GM12878 (cell line): ENCODE measurements at regions of chr9 and their contacts with region 1.

Region 1: GRCh38 chr9:4339357-4339756 is 39.5 kb upstream of the GLIS3 start:
- DNase-seq: peak; percentile 52
- ATAC-seq: peak; percentile 94
- H3K4me3 ChIP-seq: no peak overlapping the region
- H3K27ac ChIP-seq: no peak overlapping the region
- H3K4me1 ChIP-seq: no peaks in the 10 kb centered on the region
- H3K27me3 ChIP-seq: no peaks in the 10 kb centered on the region; a peak in 1 of 4 replicates
- CTCF ChIP-seq: peak; percentile 90 to 99 (median 94)
- EP300 ChIP-seq: no peak
- POLR2A ChIP-seq: no peak
- RAD21 ChIP-seq: peak; percentile 90

Region 2: DNA sequence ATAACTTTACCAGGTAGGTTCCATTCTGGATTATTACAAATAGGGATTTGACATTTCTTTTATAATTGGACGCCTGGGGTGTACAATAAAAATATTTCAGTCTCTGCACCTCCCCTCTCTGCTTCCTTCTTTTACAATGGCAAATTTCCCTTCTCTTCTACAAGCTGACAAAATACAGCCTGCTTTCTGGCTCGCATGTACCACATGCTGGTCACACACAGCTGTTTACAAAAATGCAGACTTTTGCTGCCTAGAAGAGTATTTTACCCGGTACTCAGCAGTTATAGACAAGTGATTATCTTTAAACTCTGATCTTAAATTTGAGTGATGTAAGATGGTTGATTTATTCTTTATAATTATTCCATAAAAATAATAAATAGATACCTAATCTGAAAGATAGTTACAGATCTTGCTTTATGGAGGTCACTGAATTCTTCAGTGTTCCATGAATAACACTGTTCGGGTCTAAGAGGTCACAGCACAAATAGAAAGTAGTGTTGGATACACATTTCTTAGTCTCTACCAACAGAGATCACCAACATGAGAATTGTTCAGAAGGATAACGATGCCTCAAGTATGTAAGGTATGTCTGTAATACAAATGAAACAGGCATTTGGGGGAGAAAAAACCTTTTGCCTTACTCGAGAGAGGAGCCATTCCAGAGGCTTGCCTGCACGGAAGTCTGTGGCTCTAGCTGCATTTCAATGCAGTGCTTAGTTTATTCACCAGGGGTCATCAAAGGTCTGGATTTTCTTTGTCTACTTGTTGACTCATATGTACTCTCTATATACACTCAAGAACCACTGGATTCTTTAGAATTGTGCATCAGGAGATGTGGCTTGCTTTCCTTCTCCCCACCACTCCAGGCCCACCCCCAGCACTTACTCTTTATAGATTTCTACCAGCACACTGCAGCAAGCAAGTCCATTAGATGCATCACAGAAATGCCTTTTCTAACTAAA is 607.0 kb before region 1 on chr9:
- CTCF ChIA-PET with region 1: interaction called, 7 read pairs
- POLR2A ChIA-PET with region 1: no interaction called
- RAD21 ChIA-PET with region 1: interaction called, 8 read pairs
- SMC1A ChIA-PET with region 1: interaction called, 8 read pairs
- in situ Hi-C with region 1: loop called (anchors 10 kb)
- intact Hi-C with region 1: no loop called
- DNase-seq: peak; percentile 64
- ATAC-seq: peak; percentile 88
- H3K4me3 ChIP-seq: no peak overlapping the region
- H3K27ac ChIP-seq: no peak overlapping the region
- H3K4me1 ChIP-seq: peaks cover 22% of the 10 kb centered on the region
- H3K27me3 ChIP-seq: no peaks in the 10 kb centered on the region
- CTCF ChIP-seq: peak; percentile 60 to 83 (median 65)
- EP300 ChIP-seq: no peak
- POLR2A ChIP-seq: no peak
- RAD21 ChIP-seq: peak; percentile 83

Region 3: DNA sequence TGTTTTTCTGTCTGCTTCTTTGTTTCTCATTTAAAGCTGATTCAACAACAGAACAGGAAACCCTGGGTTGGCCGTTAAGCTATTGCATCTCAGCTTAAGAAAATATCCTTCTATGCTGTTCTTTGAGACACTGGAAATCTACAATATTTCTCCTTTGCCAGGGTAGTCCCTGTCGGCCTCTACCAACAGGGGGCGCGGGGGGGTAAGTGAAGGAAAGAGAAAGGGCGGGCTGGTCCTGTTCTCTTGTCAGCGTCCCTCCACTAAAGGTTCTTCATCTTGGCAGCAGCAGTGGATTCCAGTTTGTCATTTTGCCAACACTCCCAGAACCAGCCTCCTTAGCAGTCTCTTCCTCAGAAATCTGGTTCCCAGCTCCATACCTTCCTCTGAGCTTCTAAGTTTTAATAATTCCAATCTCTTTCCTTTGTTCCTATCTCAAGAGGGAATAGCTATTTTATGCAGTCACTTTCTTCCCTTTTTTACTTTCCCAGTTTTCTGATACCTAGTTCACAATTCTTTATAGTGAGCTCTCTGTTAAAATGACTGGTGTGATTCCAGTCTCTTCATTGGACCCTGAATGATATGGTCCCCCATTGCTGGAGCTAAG is 261.8 kb before region 1 on chr9:
- CTCF ChIA-PET with region 1: interaction called, 15 read pairs
- POLR2A ChIA-PET with region 1: no interaction called
- RAD21 ChIA-PET with region 1: no interaction called
- SMC1A ChIA-PET with region 1: interaction called, 3 read pairs
- in situ Hi-C with region 1: no loop called
- intact Hi-C with region 1: loop called (anchors 2 kb)
- DNase-seq: no peak
- ATAC-seq: peak; percentile 88
- H3K4me3 ChIP-seq: no peak overlapping the region
- H3K27ac ChIP-seq: no peak overlapping the region
- H3K4me1 ChIP-seq: no peaks in the 10 kb centered on the region
- H3K27me3 ChIP-seq: no peaks in the 10 kb centered on the region
- CTCF ChIP-seq: peak; percentile 54 to 78 (median 72)
- EP300 ChIP-seq: no peak
- POLR2A ChIP-seq: no peak
- RAD21 ChIP-seq: peak; percentile 63

Region 4: GRCh38 chr9:4289411-4290380 is 49.7 kb before region 1 on chr9:
- CTCF ChIA-PET with region 1: no interaction called
- POLR2A ChIA-PET with region 1: no interaction called
- RAD21 ChIA-PET with region 1: no interaction called
- SMC1A ChIA-PET with region 1: no interaction called
- in situ Hi-C with region 1: no loop called
- intact Hi-C with region 1: no loop called
- DNase-seq: no peak
- ATAC-seq: peak; percentile 57
- H3K4me3 ChIP-seq: no peak overlapping the region
- H3K27ac ChIP-seq: no peak overlapping the region
- H3K4me1 ChIP-seq: no peaks in the 10 kb centered on the region
- H3K27me3 ChIP-seq: peaks cover 0 to 3% of the 10 kb centered on the region in 2 experiments; a peak in 2 of 4 replicates
- CTCF ChIP-seq: no peak
- EP300 ChIP-seq: no peak
- POLR2A ChIP-seq: no peak
- RAD21 ChIP-seq: no peak

Region 5: DNA sequence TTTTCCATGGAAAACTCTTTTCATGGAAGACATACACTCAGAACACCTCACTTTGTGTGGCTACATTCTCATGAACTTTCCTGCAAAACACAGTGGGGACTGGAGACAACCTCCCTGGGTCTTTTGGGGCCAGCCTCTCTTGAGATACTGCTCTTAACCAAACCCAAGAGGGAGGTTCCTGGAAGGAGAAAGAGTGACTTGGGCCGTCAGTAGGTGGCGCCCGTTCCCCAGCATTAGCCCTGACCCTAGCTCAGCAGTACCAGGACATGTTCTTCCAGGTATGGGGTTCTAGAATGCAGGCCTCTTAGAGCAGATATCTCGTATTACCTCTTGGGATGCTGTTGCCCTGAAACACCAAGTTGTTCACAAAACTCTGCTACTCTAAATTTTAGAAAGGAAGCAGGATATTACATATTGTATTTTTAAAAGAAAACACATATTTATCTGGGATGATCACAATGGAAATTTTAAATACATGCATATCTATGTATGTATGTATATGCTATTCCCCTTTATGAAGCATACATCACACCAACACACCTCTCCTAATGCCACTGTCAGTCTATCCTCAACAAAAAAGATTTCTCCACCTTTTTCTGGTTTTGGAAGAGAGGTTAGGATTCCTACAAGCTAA is 23.7 kb before region 1 on chr9:
- CTCF ChIA-PET with region 1: interaction called, 102 read pairs
- POLR2A ChIA-PET with region 1: no interaction called
- RAD21 ChIA-PET with region 1: interaction called, 14 read pairs
- SMC1A ChIA-PET with region 1: interaction called, 22 read pairs
- in situ Hi-C with region 1: no loop called
- intact Hi-C with region 1: no loop called
- DNase-seq: peak; percentile 32
- ATAC-seq: peak; percentile 100
- H3K4me3 ChIP-seq: no peak overlapping the region
- H3K27ac ChIP-seq: no peak overlapping the region
- H3K4me1 ChIP-seq: no peaks in the 10 kb centered on the region
- H3K27me3 ChIP-seq: no peaks in the 10 kb centered on the region; a peak in 1 of 4 replicates
- CTCF ChIP-seq: peak; percentile 81 to 92 (median 91)
- EP300 ChIP-seq: no peak
- POLR2A ChIP-seq: no peak
- RAD21 ChIP-seq: peak; percentile 91

Region 6: GRCh38 chr9:4327504-4328191 is 11.7 kb before region 1 on chr9:
- CTCF ChIA-PET with region 1: interaction called, 20 read pairs
- POLR2A ChIA-PET with region 1: no interaction called
- RAD21 ChIA-PET with region 1: no interaction called
- SMC1A ChIA-PET with region 1: interaction called, 10 read pairs
- in situ Hi-C with region 1: no loop called
- intact Hi-C with region 1: no loop called
- DNase-seq: no peak
- ATAC-seq: no peak
- H3K4me3 ChIP-seq: no peak overlapping the region
- H3K27ac ChIP-seq: no peak overlapping the region
- H3K4me1 ChIP-seq: no peaks in the 10 kb centered on the region
- H3K27me3 ChIP-seq: no peaks in the 10 kb centered on the region
- CTCF ChIP-seq: peak in 1 of 3 experiments; percentile 15; a peak in 1 of 6 replicates
- EP300 ChIP-seq: no peak
- POLR2A ChIP-seq: no peak
- RAD21 ChIP-seq: no peak

Region 7: DNA sequence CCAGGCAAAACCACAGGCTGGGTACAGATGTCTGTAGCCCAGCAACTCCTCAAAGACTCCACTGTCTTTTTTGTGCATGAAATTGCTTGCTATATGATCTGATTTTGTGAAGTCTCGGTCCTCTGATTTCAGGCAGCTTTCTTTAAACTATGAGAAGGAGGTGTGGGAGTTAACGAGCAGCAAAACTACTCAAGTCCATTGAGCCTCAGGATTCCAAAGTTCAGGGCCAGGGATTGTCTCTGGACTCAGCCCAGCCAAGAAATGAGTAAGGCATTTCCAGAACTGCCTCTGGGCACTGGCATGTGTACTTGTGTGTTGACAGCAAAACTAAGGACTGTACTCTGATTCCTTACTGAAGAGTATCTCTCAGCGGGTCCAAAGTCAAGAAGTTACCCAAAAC is 13.9 kb after region 1 on chr9:
- CTCF ChIA-PET with region 1: interaction called, 16 read pairs
- POLR2A ChIA-PET with region 1: no interaction called
- RAD21 ChIA-PET with region 1: no interaction called
- SMC1A ChIA-PET with region 1: interaction called, 3 read pairs
- in situ Hi-C with region 1: no loop called
- intact Hi-C with region 1: no loop called
- DNase-seq: no peak
- ATAC-seq: no peak
- H3K4me3 ChIP-seq: no peak overlapping the region
- H3K27ac ChIP-seq: no peak overlapping the region
- H3K4me1 ChIP-seq: no peaks in the 10 kb centered on the region
- H3K27me3 ChIP-seq: 0 out of 4 replicates have a peak, but pooled peaks cover 0 to 1% of the 10 kb centered on the region in 2 experiments
- CTCF ChIP-seq: no peak
- EP300 ChIP-seq: no peak
- POLR2A ChIP-seq: no peak
- RAD21 ChIP-seq: no peak

Region 8: GRCh38 chr9:4366591-4367330 is 27.4 kb after region 1 on chr9:
- CTCF ChIA-PET with region 1: interaction called, 23 read pairs
- POLR2A ChIA-PET with region 1: no interaction called
- RAD21 ChIA-PET with region 1: interaction called, 5 read pairs
- SMC1A ChIA-PET with region 1: no interaction called
- in situ Hi-C with region 1: no loop called
- intact Hi-C with region 1: no loop called
- DNase-seq: no peak
- ATAC-seq: peak; percentile 64
- H3K4me3 ChIP-seq: no peak overlapping the region
- H3K27ac ChIP-seq: no peak overlapping the region
- H3K4me1 ChIP-seq: no peaks in the 10 kb centered on the region
- H3K27me3 ChIP-seq: no peaks in the 10 kb centered on the region
- CTCF ChIP-seq: peak; percentile 73 to 74 (median 73)
- EP300 ChIP-seq: no peak
- POLR2A ChIP-seq: no peak
- RAD21 ChIP-seq: peak; percentile 71

Region 9: GRCh38 chr9:4381744-4382143 is 42.4 kb after region 1 on chr9:
- CTCF ChIA-PET with region 1: no interaction called
- POLR2A ChIA-PET with region 1: no interaction called
- RAD21 ChIA-PET with region 1: no interaction called
- SMC1A ChIA-PET with region 1: no interaction called
- in situ Hi-C with region 1: no loop called
- intact Hi-C with region 1: no loop called
- DNase-seq: no peak
- ATAC-seq: no peak
- H3K4me3 ChIP-seq: no peak overlapping the region
- H3K27ac ChIP-seq: no peak overlapping the region
- H3K4me1 ChIP-seq: peaks cover 5% of the 10 kb centered on the region; the same call in 1 of the 2 replicates
- H3K27me3 ChIP-seq: no peaks in the 10 kb centered on the region
- CTCF ChIP-seq: no peak
- EP300 ChIP-seq: no peak
- POLR2A ChIP-seq: no peak
- RAD21 ChIP-seq: no peak

Region 10: DNA sequence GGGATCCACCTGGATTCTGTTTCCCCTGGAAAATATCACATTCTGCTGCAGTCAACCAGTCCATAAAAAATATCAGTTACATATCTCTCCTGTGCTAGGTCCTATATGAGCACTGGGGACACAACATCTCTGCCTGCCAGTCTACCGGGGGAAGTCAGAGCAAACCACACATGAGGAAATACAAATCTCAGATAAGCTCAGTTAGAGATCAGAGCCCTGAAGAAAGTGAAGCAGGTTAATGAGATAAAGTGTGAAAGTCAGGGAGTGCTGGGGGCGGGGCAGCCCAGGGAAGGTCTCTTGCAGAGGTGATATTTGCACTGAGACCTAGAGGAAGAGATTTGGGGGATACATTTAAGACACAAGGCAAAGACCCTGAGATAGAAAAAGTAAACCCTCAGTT is 83.1 kb after region 1 on chr9:
- CTCF ChIA-PET with region 1: no interaction called
- POLR2A ChIA-PET with region 1: no interaction called
- RAD21 ChIA-PET with region 1: no interaction called
- SMC1A ChIA-PET with region 1: no interaction called
- in situ Hi-C with region 1: no loop called
- intact Hi-C with region 1: no loop called
- DNase-seq: no peak
- ATAC-seq: peak; percentile 87
- H3K4me3 ChIP-seq: no peak overlapping the region
- H3K27ac ChIP-seq: no peak overlapping the region; the same call in 1 of the 2 replicates
- H3K4me1 ChIP-seq: peaks cover 25% of the 10 kb centered on the region
- H3K27me3 ChIP-seq: no peaks in the 10 kb centered on the region
- CTCF ChIP-seq: no peak
- EP300 ChIP-seq: no peak
- POLR2A ChIP-seq: no peak
- RAD21 ChIP-seq: peak; percentile 25; the same call in 1 of the 2 replicates